Naive thymus-derived CD8-positive, alpha-beta T cell (primary cell): ENCODE measurements at regions of chr1 and their contacts with region 1.

Region 1: GRCh38 chr1:52702886-52703787 is 5.0 kb upstream of the COA7 start:
- DNase-seq: peak; percentile 60 to 92 (median 82)
- ATAC-seq: peak; percentile 94
- H3K4me3 Mint-ChIP-seq: peak overlapping the region; percentile 87 to 97 (median 90)
- H3K27ac Mint-ChIP-seq: peak overlapping the region; percentile 95 to 99 (median 98)
- H3K4me1 Mint-ChIP-seq: peaks cover 10 to 34% (median 27%) of the 10 kb centered on the region in 4 donors
- H3K27me3 Mint-ChIP-seq: peaks cover 0 to 2% (median 0%) of the 10 kb centered on the region in 5 donors

Region 2: DNA sequence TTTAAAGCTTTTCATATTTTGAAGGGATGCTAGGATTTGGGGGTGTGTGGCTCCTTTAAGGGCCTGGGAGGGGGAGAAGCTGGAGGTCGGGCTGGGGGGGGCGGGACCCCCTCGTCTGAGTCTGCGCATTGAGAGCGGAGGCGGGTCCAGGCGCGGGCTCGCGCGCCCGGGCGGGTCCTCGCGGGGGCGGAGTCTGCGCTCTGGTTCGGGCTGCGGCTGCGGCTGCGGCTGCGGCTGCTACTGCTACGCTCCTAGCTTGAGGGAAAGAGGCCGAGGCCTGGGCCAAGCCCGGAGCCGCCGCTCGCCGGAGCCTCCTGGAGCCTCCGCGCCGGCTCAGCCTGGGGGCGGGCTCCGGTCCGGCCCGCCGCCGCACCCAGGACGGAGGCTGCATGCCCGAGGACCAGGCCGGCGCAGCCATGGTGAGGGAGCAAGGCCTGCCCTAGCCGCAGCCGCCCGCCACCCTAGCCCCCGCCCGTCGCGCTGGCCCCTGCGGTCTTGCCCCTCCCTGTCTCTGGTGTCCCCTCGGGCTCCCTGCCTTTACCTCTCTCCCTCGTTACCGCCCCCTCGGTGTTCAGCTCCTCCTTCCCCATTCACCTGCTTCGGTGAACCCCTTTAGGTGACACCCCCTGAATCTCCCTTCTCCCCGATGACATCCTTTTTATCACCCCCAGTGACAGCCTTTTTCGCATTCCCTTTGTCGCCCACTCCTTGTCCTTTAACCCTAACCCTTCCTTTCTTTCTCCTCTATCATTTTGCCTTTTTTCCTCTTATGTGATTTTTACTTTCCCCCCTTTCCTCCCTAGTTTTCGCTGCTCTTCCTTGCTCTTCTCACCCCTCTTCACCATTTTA is 23.4 kb after region 1 on chr1 and contains the start of gene ZYG11B:
- POLR2A ChIA-PET with region 1: interaction called, 11 read pairs
- DNase-seq: peak; percentile 83 to 93 (median 90)
- ATAC-seq: peak; percentile 90 to 93
- H3K4me3 Mint-ChIP-seq: peak within 1 kb of the TSS; percentile 90 to 98 (median 94)
- H3K27ac Mint-ChIP-seq: peak within 1 kb of the TSS; percentile 84 to 95 (median 92)
- H3K4me1 Mint-ChIP-seq: peaks cover 26 to 50% (median 40%) of the 10 kb centered on the region in 4 donors
- H3K27me3 Mint-ChIP-seq: peaks cover 0 to 2% (median 0%) of the 10 kb centered on the region in 5 donors
- polyA plus RNA-seq, gene ZYG11B: 12.3 to 14.9 (median 12.5) TPM

Region 3: GRCh38 chr1:52756020-52756419 is 52.9 kb after region 1 on chr1:
- POLR2A ChIA-PET with region 1: no interaction called
- DNase-seq: no peak
- ATAC-seq: no peak
- H3K4me3 Mint-ChIP-seq: no peak overlapping the region
- H3K27ac Mint-ChIP-seq: peak overlapping the region in 2 of 10 donors; percentile 9 to 51
- H3K4me1 Mint-ChIP-seq: peaks cover 6 to 14% (median 11%) of the 10 kb centered on the region in 4 donors
- H3K27me3 Mint-ChIP-seq: no peaks in the 10 kb centered on the region